HCT116 (cell line): ENCODE measurements at regions of chr16 and their contacts with region 1.

Region 1: DNA sequence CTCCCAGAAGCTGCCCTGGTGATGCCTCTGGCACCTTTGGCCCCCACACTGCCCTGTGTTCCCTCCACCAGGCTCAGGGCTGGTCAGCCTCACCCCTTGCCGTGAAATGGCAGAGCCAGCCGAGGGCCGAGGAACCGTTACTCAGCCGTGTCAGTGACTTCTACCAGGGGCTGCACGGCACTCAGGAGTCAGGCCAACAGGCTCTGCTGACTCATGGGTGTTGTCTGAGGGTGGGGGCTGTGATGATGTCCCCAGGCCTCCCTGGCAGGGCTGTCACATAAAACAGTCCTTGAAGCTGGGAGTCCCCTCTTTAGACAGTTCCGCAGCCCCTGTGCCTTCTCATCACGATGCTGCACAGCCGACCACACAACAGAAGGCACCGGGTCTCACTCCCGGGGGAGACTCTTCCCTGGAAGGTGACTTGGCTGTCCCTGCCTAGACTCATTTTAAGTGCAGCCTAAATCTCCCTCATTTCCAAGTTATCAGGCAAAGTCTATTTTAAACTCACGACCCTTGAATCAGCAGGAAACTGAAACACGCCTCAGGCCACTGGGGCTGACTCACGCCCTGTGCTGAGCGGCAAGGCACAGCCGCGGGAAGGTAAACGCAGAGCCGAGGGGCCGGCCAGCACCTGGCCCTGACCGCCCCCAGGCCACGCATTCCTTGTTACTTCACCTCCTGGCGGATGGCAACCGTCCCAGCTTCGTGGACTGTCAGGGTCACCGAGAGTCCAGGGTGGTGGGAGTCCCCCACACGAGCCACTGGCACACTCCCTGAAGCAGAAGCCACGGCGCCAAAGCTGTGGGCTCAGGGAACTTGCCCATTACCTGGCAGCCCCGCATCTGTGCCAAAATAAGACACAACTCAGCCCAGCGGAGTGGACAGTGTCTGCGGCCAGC is 102.6 kb downstream of the ZNF778 start:
- DNase-seq: no peak
- ATAC-seq: peak; percentile 67
- H3K4me3 ChIP-seq: peak overlapping the region; percentile 45 to 52
- H3K27ac ChIP-seq: peak overlapping the region; percentile 86
- H3K4me1 ChIP-seq: peaks cover 93 to 100% of the 10 kb centered on the region in 2 experiments
- H3K27me3 ChIP-seq: no peaks in the 10 kb centered on the region
- CTCF ChIP-seq: no peak
- POLR2A ChIP-seq: no peak
- RAD21 ChIP-seq: no peak

Region 2: GRCh38 chr16:89241187-89242007 is 78.7 kb before region 1 on chr16:
- CTCF ChIA-PET with region 1: no interaction called
- POLR2A ChIA-PET with region 1: no interaction called
- RAD21 ChIA-PET with region 1: no interaction called
- intact Hi-C with region 1: loop called (anchors 10 kb)
- DNase-seq: peak; percentile 79
- ATAC-seq: peak; percentile 75
- H3K4me3 ChIP-seq: peak overlapping the region; percentile 88 to 91
- H3K27ac ChIP-seq: peak overlapping the region; percentile 83
- H3K4me1 ChIP-seq: peaks cover 1 to 10% of the 10 kb centered on the region in 2 experiments; a peak in 3 of 4 replicates
- H3K27me3 ChIP-seq: no peaks in the 10 kb centered on the region
- CTCF ChIP-seq: no peak
- POLR2A ChIP-seq: peak; percentile 93
- RAD21 ChIP-seq: no peak

Region 3: GRCh38 chr16:89343501-89344457 is 23.6 kb after region 1 on chr16:
- CTCF ChIA-PET with region 1: no interaction called
- POLR2A ChIA-PET with region 1: no interaction called
- RAD21 ChIA-PET with region 1: no interaction called
- intact Hi-C with region 1: no loop called
- DNase-seq: peak; percentile 77
- ATAC-seq: peak; percentile 83
- H3K4me3 ChIP-seq: peak overlapping the region; percentile 4 to 40; a peak in 3 of 4 replicates
- H3K27ac ChIP-seq: peak overlapping the region; percentile 39
- H3K4me1 ChIP-seq: peaks cover 40 to 52% of the 10 kb centered on the region in 2 experiments
- H3K27me3 ChIP-seq: no peaks in the 10 kb centered on the region
- CTCF ChIP-seq: peak in 2 of 3 experiments; percentile 22 to 40; a peak in 3 of 6 replicates
- POLR2A ChIP-seq: no peak
- RAD21 ChIP-seq: no peak